ENCODE measurements at regions of chr10 and their contacts with region 1.

Region 1: DNA sequence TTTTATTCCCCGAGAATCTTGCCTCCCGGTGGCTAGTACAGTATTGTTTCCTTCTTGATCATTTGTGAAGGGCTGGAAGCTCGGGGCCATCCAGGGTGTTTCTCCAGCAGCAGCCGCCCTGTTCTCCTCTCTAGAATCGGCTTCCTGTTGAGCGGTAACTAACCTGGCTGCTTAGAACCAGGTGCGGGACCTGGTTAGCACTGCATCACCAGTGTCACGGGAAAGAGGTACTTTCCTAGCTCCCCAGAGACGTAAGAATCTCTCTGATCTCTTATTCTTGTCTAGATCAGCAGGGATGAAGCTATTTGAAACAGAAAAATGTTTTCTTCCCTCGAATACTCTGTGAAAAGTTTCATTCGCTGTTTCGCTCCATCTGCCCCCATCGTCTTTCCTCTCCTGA is 239.2 kb downstream of the CELF2 start:
- DNase-seq: no peak
- ATAC-seq: no peak
- H3K4me3 ChIP-seq: no peak overlapping the region
- H3K27ac ChIP-seq: no peak overlapping the region
- H3K4me1 ChIP-seq: no peaks in the 10 kb centered on the region
- H3K27me3 ChIP-seq: peaks cover 81% of the 10 kb centered on the region
- CTCF ChIP-seq: no peak

Region 2: DNA sequence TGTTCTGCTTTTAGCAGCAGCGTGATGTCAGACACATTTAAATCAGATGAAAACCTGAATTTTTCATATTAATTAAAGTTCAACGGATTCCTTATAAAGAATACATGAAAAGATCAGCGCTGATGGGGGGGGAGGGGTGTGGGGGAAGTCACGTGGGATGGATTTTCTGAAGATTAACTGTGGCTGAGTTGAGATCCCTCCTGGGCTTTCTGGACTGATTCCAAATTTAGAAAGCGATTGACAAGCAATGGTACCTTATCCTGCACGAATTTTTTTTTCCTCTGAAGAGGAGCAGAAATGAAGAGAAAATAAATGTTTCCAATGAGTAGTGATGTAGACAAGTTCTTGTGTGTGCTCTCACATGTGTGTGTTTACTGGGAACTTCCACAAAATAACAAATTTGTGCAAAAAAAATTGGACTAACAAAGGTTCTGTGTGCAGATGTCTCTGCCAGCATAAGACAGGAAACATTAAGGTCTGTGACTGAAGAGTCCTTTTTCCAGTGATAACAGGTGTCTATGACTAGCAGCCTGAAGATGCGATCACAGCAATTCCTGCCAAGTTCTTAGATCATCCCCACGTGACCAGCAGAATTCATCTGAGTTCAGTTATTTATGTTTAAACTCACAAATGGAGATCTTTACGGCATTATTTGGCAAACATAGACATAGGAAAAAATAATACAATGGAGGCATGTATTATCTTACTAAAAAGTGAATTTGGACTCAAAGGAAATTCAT is 824.4 kb before region 1 on chr10:
- CTCF ChIA-PET with region 1: no interaction called
- POLR2A ChIA-PET with region 1: interaction called, 14 read pairs
- intact Hi-C with region 1: no loop called
- DNase-seq: no peak
- ATAC-seq: no peak
- H3K4me3 ChIP-seq: no peak overlapping the region
- H3K27ac ChIP-seq: no peak overlapping the region
- H3K4me1 ChIP-seq: no peaks in the 10 kb centered on the region
- H3K27me3 ChIP-seq: no peaks in the 10 kb centered on the region
- CTCF ChIP-seq: no peak

Region 3: GRCh38 chr10:10584161-10584560 is 672.7 kb before region 1 on chr10:
- CTCF ChIA-PET with region 1: no interaction called
- POLR2A ChIA-PET with region 1: no interaction called
- intact Hi-C with region 1: no loop called
- DNase-seq: no peak
- ATAC-seq: no peak
- H3K4me3 ChIP-seq: no peak overlapping the region
- H3K27ac ChIP-seq: no peak overlapping the region
- H3K4me1 ChIP-seq: no peaks in the 10 kb centered on the region
- H3K27me3 ChIP-seq: no peaks in the 10 kb centered on the region
- CTCF ChIP-seq: no peak

Region 4: GRCh38 chr10:10833955-10834354 is 422.9 kb before region 1 on chr10:
- CTCF ChIA-PET with region 1: no interaction called
- POLR2A ChIA-PET with region 1: no interaction called
- intact Hi-C with region 1: no loop called
- DNase-seq: no peak
- ATAC-seq: no peak
- H3K4me3 ChIP-seq: no peak overlapping the region
- H3K27ac ChIP-seq: no peak overlapping the region
- H3K4me1 ChIP-seq: no peaks in the 10 kb centered on the region
- H3K27me3 ChIP-seq: no peaks in the 10 kb centered on the region
- CTCF ChIP-seq: no peak

Region 5: GRCh38 chr10:10996966-10997620 is 259.8 kb before region 1 on chr10:
- CTCF ChIA-PET with region 1: no interaction called
- POLR2A ChIA-PET with region 1: no interaction called
- intact Hi-C with region 1: no loop called
- DNase-seq: no peak
- ATAC-seq: no peak
- H3K4me3 ChIP-seq: no peak overlapping the region
- H3K27ac ChIP-seq: no peak overlapping the region
- H3K4me1 ChIP-seq: no peaks in the 10 kb centered on the region
- H3K27me3 ChIP-seq: no peaks in the 10 kb centered on the region
- CTCF ChIP-seq: no peak

Measured in PC-3 (cell line).